CD4-positive, alpha-beta T cell (primary cell): ENCODE measurements at regions of chr16 and their contacts with region 1.

Region 1: GRCh38 chr16:1363501-1364041 is 11.8 kb downstream of the GNPTG start:
- DNase-seq: peak; percentile 48 to 82 (median 64)
- ATAC-seq: peak; percentile 98
- H3K4me3 ChIP-seq: no peak overlapping the region
- H3K4me3 Mint-ChIP-seq: no peak overlapping the region
- H3K27ac ChIP-seq: no peak overlapping the region
- H3K27ac Mint-ChIP-seq: no peak overlapping the region
- H3K4me1 ChIP-seq: no peaks in the 10 kb centered on the region
- H3K4me1 Mint-ChIP-seq: no peaks in the 10 kb centered on the region
- H3K27me3 ChIP-seq: no peaks in the 10 kb centered on the region
- H3K27me3 Mint-ChIP-seq: no peaks in the 10 kb centered on the region
- CTCF ChIP-seq: peak; percentile 82

Region 2: GRCh38 chr16:1019231-1020090 is 344.1 kb before region 1 on chr16:
- CTCF ChIA-PET with region 1: no interaction called
- POLR2A ChIA-PET with region 1: no interaction called
- intact Hi-C with region 1: no loop called
- DNase-seq: no peak
- ATAC-seq: no peak
- H3K4me3 ChIP-seq: no peak overlapping the region
- H3K4me3 Mint-ChIP-seq: no peak overlapping the region
- H3K27ac ChIP-seq: no peak overlapping the region
- H3K27ac Mint-ChIP-seq: no peak overlapping the region
- H3K4me1 ChIP-seq: no peaks in the 10 kb centered on the region
- H3K4me1 Mint-ChIP-seq: no peaks in the 10 kb centered on the region
- H3K27me3 ChIP-seq: peaks cover 0 to 4% of the 10 kb centered on the region in 2 experiments
- H3K27me3 Mint-ChIP-seq: peaks cover 4% of the 10 kb centered on the region
- CTCF ChIP-seq: no peak

Region 3: DNA sequence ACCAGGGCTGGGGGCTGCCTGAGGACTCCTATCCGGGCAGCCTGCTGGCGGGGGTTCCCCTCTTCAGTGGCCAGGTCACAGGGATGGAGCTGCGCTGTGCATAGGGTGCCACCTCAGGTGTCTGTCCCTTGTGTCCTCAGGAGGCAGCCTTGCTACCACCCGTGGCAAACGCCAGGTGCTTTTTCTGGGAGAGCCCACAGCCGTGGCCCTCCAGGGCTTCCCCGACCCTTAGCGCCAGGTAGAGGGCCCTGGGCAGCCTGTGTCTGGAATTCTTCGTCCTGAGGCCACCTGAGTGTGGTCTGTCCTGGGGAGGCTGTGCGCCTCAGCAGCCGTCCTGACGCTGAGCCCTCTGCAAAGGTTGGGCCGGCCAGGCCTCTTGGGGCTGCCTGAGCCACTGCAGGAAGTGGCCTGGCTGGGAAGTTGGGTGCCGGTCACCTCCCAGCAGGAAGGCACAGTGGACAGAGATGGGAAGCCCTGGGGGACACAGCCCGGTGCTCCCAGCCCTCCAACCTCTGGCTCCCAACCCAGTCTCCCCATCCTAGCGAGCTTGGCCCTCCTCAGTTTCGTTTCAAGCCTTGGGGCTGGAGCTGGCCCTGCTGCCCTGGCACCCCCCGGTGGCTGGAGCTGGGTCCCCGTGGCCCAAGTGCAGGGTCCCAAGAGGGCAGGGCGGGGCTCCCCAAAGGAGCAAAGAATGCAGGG is 37.7 kb before region 1 on chr16:
- CTCF ChIA-PET with region 1: no interaction called
- POLR2A ChIA-PET with region 1: no interaction called
- intact Hi-C with region 1: no loop called
- DNase-seq: no peak
- ATAC-seq: no peak
- H3K4me3 ChIP-seq: no peak overlapping the region
- H3K4me3 Mint-ChIP-seq: no peak overlapping the region
- H3K27ac ChIP-seq: no peak overlapping the region
- H3K27ac Mint-ChIP-seq: no peak overlapping the region
- H3K4me1 ChIP-seq: peaks cover 1% of the 10 kb centered on the region
- H3K4me1 Mint-ChIP-seq: no peaks in the 10 kb centered on the region
- H3K27me3 ChIP-seq: peaks cover 0 to 4% of the 10 kb centered on the region in 2 experiments
- H3K27me3 Mint-ChIP-seq: no peaks in the 10 kb centered on the region
- CTCF ChIP-seq: no peak

Region 4: GRCh38 chr16:1351582-1352362 is 11.8 kb before region 1 on chr16 and contains the starts of genes GNPTG and TSR3:
- CTCF ChIA-PET with region 1: interaction called, 14 read pairs
- POLR2A ChIA-PET with region 1: no interaction called
- intact Hi-C with region 1: no loop called
- DNase-seq: peak; percentile 70 to 95 (median 82)
- ATAC-seq: peak; percentile 84
- H3K4me3 ChIP-seq: peak within 1 kb of the TSS; percentile 87
- H3K4me3 Mint-ChIP-seq: peak within 1 kb of the TSS; percentile 90
- H3K27ac ChIP-seq: peak within 1 kb of the TSS in 1 of 2 donors; percentile 46
- H3K27ac Mint-ChIP-seq: peak within 1 kb of the TSS; percentile 89
- H3K4me1 ChIP-seq: peaks cover 54% of the 10 kb centered on the region
- H3K4me1 Mint-ChIP-seq: peaks cover 16% of the 10 kb centered on the region
- H3K27me3 ChIP-seq: no peaks in the 10 kb centered on the region
- H3K27me3 Mint-ChIP-seq: no peaks in the 10 kb centered on the region
- CTCF ChIP-seq: no peak
- total RNA-seq, gene GNPTG: 27.6 to 32.0 TPM
- total RNA-seq, gene TSR3: 19.9 to 21.4 TPM

Region 5: DNA sequence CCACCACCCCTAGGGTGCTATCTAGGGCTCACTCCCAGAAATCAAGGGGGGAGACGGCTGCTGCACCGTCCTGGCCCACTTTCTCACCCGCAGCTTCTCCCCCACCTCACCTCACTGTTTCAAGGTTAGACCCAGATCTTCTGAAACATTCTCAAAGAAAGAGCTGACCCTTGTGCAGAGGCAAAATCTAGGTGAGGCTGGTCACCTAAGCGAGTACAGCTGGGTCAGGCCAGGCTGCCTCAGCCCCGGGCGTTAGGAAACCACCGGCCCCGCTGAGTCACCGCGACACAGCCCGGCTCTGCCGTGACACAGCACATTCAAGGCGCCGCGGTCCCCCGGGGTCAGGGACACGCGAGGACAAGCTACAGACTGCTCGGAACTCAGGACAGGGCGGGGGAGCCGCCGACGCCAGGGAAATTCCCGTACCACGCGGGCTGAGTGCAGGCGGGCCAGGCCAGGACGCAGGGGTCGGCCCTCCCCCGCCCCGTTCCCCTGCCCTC is 15.3 kb after region 1 on chr16:
- CTCF ChIA-PET with region 1: interaction called, 15 read pairs
- POLR2A ChIA-PET with region 1: interaction called, 3 read pairs
- intact Hi-C with region 1: no loop called
- DNase-seq: peak in 12 of 14 experiments; percentile 7 to 90 (median 38)
- ATAC-seq: peak; percentile 60
- H3K4me3 ChIP-seq: peak overlapping the region; percentile 26
- H3K4me3 Mint-ChIP-seq: no peak overlapping the region
- H3K27ac ChIP-seq: no peak overlapping the region
- H3K27ac Mint-ChIP-seq: no peak overlapping the region
- H3K4me1 ChIP-seq: peaks cover 23% of the 10 kb centered on the region
- H3K4me1 Mint-ChIP-seq: peaks cover 9% of the 10 kb centered on the region
- H3K27me3 ChIP-seq: no peaks in the 10 kb centered on the region
- H3K27me3 Mint-ChIP-seq: no peaks in the 10 kb centered on the region
- CTCF ChIP-seq: no peak